CD8-positive, alpha-beta T cell (primary cell): ENCODE measurements at regions of chr1 and their contacts with region 1.

Region 1: DNA sequence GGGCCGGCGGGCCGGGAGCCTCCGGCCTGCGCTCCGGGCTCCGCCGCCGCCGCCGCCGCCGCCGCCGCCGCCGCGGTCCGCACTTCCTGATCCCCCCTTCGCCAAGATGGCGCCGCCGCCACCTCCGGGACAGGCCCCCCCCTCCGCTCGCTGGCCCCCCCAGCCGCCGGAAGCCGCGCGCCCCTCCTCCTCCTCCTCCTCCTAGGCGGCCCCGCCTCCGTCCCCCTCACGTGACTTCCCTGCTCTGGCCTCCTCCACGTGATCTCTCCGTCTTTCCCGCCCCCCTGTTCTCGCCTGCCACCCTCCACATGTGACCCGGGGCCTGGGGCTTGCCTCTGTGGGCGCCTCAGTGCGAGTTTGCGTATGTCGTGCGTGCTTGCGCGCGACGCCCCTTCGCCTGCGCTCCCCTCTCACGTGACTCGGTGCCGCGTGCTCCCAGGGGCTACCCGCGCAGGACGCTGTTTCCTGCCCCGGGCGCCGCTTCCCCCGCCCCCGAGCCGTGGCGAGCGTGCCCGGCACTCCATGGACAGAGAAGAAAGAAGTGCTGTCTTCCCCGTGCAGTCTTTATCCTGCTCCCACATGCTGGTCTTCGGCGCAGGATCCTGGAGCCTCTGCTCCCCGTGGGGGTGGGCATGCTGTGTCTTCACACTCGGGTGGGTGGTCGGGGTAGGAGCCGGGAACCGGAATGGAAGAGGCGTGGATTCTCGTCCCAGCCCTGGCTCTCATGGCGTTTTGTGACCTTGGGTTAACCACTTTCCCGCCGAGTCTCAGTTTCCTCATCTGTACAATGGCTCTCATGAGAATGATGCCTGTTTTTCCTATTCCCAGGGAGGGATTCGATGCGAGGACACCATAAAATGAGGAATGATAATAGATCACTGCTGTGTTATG is at the start of gene UBE2Q1:
- DNase-seq: peak; percentile 99 to 100 (median 99)
- ATAC-seq: peak; percentile 88
- H3K4me3 ChIP-seq: peak within 1 kb of the TSS; percentile 70 to 83
- H3K4me3 Mint-ChIP-seq: peak within 1 kb of the TSS; percentile 90
- H3K27ac ChIP-seq: peak within 1 kb of the TSS; percentile 63 to 94
- H3K27ac Mint-ChIP-seq: peak within 1 kb of the TSS; percentile 89
- H3K4me1 ChIP-seq: peaks cover 20% of the 10 kb centered on the region
- H3K4me1 Mint-ChIP-seq: peaks cover 35% of the 10 kb centered on the region
- H3K27me3 ChIP-seq: no peaks in the 10 kb centered on the region
- H3K27me3 Mint-ChIP-seq: no peaks in the 10 kb centered on the region
- CTCF ChIP-seq: no peak
- total RNA-seq, gene UBE2Q1: 77.5 to 77.7 TPM

Region 2: DNA sequence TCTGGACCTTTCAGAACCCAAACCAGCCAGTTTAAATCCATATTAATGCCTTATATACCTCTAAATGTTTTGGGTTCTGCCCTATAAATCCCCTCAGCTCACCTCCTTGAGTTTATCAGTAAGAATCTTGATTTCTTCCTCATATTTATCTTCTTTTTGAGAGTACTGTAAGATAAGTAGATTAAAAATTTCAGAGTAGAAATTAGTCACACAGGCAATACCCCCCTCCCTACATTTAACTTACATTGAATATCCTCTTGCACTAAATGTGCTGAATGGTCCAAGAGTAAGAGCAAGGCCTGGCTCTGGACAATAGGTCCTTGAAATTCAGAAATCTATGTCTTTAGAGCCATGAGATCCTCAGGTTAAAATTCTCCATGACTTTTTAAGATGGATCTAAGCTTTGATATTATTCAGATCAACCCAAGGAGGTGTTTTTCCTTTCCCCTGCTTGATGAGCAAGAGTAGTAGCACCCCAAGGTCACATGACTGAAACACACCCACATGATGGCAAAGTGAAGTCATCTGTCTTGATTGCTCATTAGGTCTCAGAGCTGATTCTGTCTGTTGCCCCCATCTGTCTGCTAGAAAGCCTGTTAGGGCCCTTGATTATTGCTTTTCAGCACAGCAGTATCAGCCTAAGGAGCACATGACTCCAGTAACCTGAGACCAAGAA is 388.1 kb before region 1 on chr1:
- CTCF ChIA-PET with region 1: no interaction called
- POLR2A ChIA-PET with region 1: no interaction called
- intact Hi-C with region 1: no loop called
- DNase-seq: peak in 2 of 9 experiments; percentile 24 to 27
- ATAC-seq: peak; percentile 58
- H3K4me3 ChIP-seq: no peak overlapping the region
- H3K4me3 Mint-ChIP-seq: no peak overlapping the region
- H3K27ac ChIP-seq: no peak overlapping the region
- H3K27ac Mint-ChIP-seq: peak overlapping the region; percentile 75
- H3K4me1 ChIP-seq: peaks cover 4% of the 10 kb centered on the region
- H3K4me1 Mint-ChIP-seq: peaks cover 39% of the 10 kb centered on the region
- H3K27me3 ChIP-seq: no peaks in the 10 kb centered on the region
- H3K27me3 Mint-ChIP-seq: no peaks in the 10 kb centered on the region
- CTCF ChIP-seq: no peak

Region 3: DNA sequence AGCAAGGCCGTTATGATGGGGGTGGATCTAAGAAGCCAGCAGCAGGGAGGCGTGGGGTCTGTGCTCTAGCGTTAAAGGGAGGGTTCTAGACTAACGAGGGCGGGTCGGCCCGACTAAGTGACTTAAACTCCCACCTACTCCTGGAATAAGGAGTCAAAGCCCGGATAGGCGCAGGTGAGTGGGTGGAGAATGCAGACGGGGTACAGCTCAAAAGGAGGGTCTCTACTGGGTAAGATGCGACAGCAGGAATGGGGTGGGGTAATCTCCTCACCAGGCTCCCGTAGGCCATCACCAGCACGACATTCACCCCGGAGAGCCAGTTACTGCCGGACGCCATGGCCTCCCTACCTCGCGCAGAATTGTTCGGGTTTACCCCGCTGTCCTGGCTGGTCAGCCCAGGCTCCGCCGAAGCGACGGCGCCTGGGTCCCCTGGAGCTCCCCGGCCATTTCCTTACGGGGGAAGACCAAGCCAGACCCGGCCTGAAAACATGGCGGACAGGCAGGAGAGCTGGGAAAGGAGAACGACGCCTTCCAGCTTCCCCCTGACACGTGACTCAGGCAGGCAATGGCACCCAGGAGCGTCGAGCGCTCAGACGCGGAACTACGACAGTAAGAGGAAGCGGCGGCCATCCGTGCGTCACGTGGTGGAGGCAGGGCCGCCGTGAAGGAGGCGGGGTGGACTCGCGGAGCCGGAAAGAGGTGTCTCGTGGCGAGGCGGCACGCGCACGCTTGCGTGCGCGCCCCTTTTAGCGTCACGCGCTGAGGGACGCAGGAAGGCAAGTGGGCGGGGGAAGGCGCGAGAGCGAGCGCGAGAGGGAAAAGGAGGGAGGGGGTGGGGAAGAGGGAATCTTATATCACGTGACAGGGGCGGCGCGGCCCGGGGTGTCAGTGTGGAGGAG is 338.5 kb before region 1 on chr1 and contains the start of gene UBAP2L:
- CTCF ChIA-PET with region 1: no interaction called
- POLR2A ChIA-PET with region 1: no interaction called
- intact Hi-C with region 1: loop called in 1 of 2 experiments (anchors 1 kb)
- DNase-seq: peak; percentile 97 to 100 (median 99)
- ATAC-seq: peak; percentile 82
- H3K4me3 ChIP-seq: peak within 1 kb of the TSS; percentile 68 to 93
- H3K4me3 Mint-ChIP-seq: peak within 1 kb of the TSS; percentile 95
- H3K27ac ChIP-seq: peak within 1 kb of the TSS; percentile 93 to 99
- H3K27ac Mint-ChIP-seq: peak within 1 kb of the TSS; percentile 99
- H3K4me1 ChIP-seq: peaks cover 54% of the 10 kb centered on the region
- H3K4me1 Mint-ChIP-seq: peaks cover 71% of the 10 kb centered on the region
- H3K27me3 ChIP-seq: no peaks in the 10 kb centered on the region
- H3K27me3 Mint-ChIP-seq: no peaks in the 10 kb centered on the region
- CTCF ChIP-seq: no peak
- total RNA-seq, gene UBAP2L: 212 to 226 TPM

Region 4: DNA sequence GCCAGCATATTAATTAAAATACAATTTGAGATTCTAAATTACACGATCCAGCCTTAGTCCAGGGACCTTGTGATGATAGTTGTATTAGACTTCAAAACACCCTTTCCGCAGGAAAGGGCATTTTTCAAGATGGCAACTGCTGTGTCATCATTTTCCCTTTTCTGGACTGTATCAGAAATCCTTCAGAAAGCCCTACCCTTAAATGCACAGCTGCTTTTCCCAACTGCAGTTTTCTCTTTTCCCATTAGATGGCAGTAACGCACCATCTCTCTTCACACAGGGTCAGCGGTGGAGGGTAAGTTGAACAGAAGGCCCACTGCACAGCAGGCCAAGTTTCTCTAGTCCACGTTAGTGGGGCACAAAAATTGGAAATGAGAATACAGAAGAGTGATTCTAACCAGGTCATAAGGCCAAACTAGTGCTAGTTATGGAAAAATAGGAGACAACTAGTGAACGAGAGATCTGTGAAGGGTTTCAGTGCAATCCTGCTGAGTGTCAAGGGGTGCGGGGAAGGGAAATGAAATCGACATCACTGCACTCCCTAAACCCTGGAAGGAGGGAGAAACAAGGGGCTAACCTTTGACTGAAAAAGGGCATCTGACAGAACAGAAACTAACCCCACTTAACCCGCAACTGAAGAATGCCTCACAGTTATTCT is 78.9 kb before region 1 on chr1:
- CTCF ChIA-PET with region 1: interaction called, 12 read pairs
- POLR2A ChIA-PET with region 1: no interaction called
- intact Hi-C with region 1: no loop called
- DNase-seq: peak in 8 of 9 experiments; percentile 12 to 80 (median 58)
- ATAC-seq: peak; percentile 91
- H3K4me3 ChIP-seq: no peak overlapping the region
- H3K4me3 Mint-ChIP-seq: no peak overlapping the region
- H3K27ac ChIP-seq: no peak overlapping the region
- H3K27ac Mint-ChIP-seq: no peak overlapping the region
- H3K4me1 ChIP-seq: peaks cover 3% of the 10 kb centered on the region
- H3K4me1 Mint-ChIP-seq: peaks cover 9% of the 10 kb centered on the region
- H3K27me3 ChIP-seq: no peaks in the 10 kb centered on the region
- H3K27me3 Mint-ChIP-seq: peaks cover 3% of the 10 kb centered on the region
- CTCF ChIP-seq: peak; percentile 98

Region 5: GRCh38 chr1:154493276-154493675 is 65.5 kb before region 1 on chr1:
- CTCF ChIA-PET with region 1: no interaction called
- POLR2A ChIA-PET with region 1: no interaction called
- intact Hi-C with region 1: no loop called
- DNase-seq: peak in 4 of 9 experiments; percentile 22 to 59 (median 44)
- ATAC-seq: peak; percentile 36
- H3K4me3 ChIP-seq: no peak overlapping the region
- H3K4me3 Mint-ChIP-seq: peak overlapping the region; percentile 73
- H3K27ac ChIP-seq: peak overlapping the region in 1 of 2 experiments; percentile 14
- H3K27ac Mint-ChIP-seq: no peak overlapping the region
- H3K4me1 ChIP-seq: peaks cover 36% of the 10 kb centered on the region
- H3K4me1 Mint-ChIP-seq: peaks cover 46% of the 10 kb centered on the region
- H3K27me3 ChIP-seq: no peaks in the 10 kb centered on the region
- H3K27me3 Mint-ChIP-seq: no peaks in the 10 kb centered on the region
- CTCF ChIP-seq: no peak

Region 6: DNA sequence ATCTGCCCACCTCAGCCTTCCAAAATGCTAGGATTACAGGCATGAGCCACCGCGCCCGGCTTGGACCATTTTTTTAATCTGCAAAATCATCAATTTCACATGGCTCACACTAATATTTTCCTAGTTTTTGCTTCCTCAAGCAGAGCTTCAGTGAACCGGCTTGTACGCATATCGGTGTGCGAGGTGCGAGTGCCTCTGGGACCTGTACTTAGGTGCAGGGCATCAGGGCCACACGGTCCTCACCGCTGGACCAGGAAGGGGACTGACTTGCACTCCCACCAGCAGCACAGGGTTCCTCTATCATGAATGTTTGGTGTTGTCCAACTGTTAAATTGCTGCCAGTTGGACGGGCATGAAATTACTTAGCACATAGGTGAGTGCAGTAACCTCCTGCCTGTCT is 41.2 kb before region 1 on chr1:
- CTCF ChIA-PET with region 1: no interaction called
- POLR2A ChIA-PET with region 1: no interaction called
- intact Hi-C with region 1: no loop called
- DNase-seq: no peak
- ATAC-seq: no peak
- H3K4me3 ChIP-seq: no peak overlapping the region
- H3K4me3 Mint-ChIP-seq: no peak overlapping the region
- H3K27ac ChIP-seq: no peak overlapping the region
- H3K27ac Mint-ChIP-seq: no peak overlapping the region
- H3K4me1 ChIP-seq: no peaks in the 10 kb centered on the region
- H3K4me1 Mint-ChIP-seq: no peaks in the 10 kb centered on the region
- H3K27me3 ChIP-seq: no peaks in the 10 kb centered on the region
- H3K27me3 Mint-ChIP-seq: peaks cover 8% of the 10 kb centered on the region
- CTCF ChIP-seq: no peak

Region 7: GRCh38 chr1:154669464-154670282 is 110.9 kb after region 1 on chr1:
- CTCF ChIA-PET with region 1: interaction called, 19 read pairs
- POLR2A ChIA-PET with region 1: no interaction called
- intact Hi-C with region 1: loop called (anchors 1 kb)
- DNase-seq: peak; percentile 48 to 86 (median 74)
- ATAC-seq: peak; percentile 100
- H3K4me3 ChIP-seq: no peak overlapping the region
- H3K4me3 Mint-ChIP-seq: no peak overlapping the region
- H3K27ac ChIP-seq: no peak overlapping the region
- H3K27ac Mint-ChIP-seq: no peak overlapping the region
- H3K4me1 ChIP-seq: peaks cover 3% of the 10 kb centered on the region
- H3K4me1 Mint-ChIP-seq: no peaks in the 10 kb centered on the region
- H3K27me3 ChIP-seq: no peaks in the 10 kb centered on the region
- H3K27me3 Mint-ChIP-seq: no peaks in the 10 kb centered on the region
- CTCF ChIP-seq: peak; percentile 80

Region 8: GRCh38 chr1:154726443-154726842 is 167.6 kb after region 1 on chr1:
- CTCF ChIA-PET with region 1: no interaction called
- POLR2A ChIA-PET with region 1: no interaction called
- intact Hi-C with region 1: no loop called
- DNase-seq: no peak
- ATAC-seq: no peak
- H3K4me3 ChIP-seq: no peak overlapping the region
- H3K4me3 Mint-ChIP-seq: no peak overlapping the region
- H3K27ac ChIP-seq: no peak overlapping the region
- H3K27ac Mint-ChIP-seq: no peak overlapping the region
- H3K4me1 ChIP-seq: no peaks in the 10 kb centered on the region
- H3K4me1 Mint-ChIP-seq: no peaks in the 10 kb centered on the region
- H3K27me3 ChIP-seq: no peaks in the 10 kb centered on the region
- H3K27me3 Mint-ChIP-seq: peaks cover 4% of the 10 kb centered on the region
- CTCF ChIP-seq: no peak

Region 9: DNA sequence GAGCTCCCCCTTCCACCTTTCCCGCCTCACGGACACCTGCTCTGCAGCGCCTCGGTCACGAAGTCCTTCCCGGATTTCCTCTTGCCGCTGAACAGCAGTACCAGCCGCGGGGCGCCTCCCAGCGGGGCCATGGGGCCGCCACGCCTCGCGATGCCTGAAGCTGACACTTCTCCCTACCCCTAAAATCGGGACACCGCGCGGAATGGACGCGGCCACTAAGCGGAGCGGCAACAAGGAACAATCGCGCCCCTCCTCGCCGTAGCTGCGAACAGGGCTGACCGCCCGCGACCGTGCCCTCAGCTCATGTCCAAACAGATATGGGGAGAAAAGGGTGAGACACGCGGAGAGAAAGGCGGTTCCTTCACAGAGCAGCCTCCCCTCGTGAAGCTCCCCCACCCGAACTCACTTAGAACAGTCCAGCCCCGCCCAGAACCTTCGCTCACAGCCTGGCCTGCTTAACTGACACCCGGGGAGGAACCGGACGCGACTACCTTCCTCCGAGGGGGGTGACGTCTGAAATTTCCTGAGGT is 377.8 kb after region 1 on chr1 and contains the start of gene PMVK:
- CTCF ChIA-PET with region 1: interaction called, 5 read pairs
- POLR2A ChIA-PET with region 1: interaction called, 3 read pairs
- intact Hi-C with region 1: loop called (anchors 1 kb)
- DNase-seq: peak; percentile 89 to 98 (median 96)
- ATAC-seq: peak; percentile 85
- H3K4me3 ChIP-seq: peak within 1 kb of the TSS; percentile 87 to 90
- H3K4me3 Mint-ChIP-seq: peak within 1 kb of the TSS; percentile 97
- H3K27ac ChIP-seq: peak within 1 kb of the TSS; percentile 94 to 97
- H3K27ac Mint-ChIP-seq: peak within 1 kb of the TSS; percentile 99
- H3K4me1 ChIP-seq: peaks cover 32% of the 10 kb centered on the region
- H3K4me1 Mint-ChIP-seq: peaks cover 49% of the 10 kb centered on the region
- H3K27me3 ChIP-seq: no peaks in the 10 kb centered on the region
- H3K27me3 Mint-ChIP-seq: no peaks in the 10 kb centered on the region
- CTCF ChIP-seq: no peak
- total RNA-seq, gene PMVK: 6.7 to 7.3 TPM

Region 10: DNA sequence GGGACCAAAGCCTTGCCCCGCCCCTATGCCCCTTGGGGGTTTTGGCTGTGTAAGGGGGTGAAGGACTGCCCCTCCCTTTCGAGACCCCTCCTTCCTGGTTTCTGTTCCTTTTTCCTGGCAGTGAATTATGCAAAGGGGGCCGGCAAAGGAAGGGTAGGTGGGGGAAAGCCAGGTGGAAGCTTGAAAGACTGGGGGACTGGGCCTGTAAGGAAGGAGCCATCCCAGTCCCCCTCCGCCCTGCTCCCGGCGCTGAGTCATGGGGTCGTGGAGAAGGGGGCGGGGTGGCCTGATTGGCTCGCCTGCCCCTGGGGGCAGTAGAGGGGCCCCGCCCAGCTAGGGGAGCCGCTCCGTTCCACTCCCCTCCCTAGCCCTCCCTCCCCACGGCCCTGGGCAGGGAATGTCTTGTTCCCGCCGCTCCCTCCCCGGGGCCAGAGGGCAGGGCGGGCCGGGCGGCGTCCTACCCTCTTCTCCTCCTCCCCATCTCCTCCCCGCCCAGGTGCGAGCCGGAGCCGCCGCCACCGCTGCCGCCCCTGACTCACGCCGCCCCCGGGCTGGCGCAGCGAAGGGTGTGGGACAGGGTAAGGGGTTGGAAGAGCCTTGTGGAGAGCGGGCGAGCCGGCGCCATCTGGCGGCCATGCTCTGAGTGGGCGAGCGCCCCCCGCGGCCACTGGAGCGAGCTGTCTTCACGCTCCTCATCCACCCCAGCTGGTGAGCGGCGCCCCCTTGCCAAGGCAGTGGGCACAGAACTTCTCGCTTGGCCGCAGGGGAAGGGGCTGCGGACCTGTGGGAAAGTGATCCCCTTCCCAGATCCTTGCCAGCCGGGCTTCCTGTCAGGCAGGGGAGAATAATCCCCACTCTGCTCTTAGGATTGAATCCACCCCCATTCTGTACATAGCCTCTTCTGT is 458.5 kb after region 1 on chr1:
- CTCF ChIA-PET with region 1: interaction called, 7 read pairs
- POLR2A ChIA-PET with region 1: no interaction called
- intact Hi-C with region 1: loop called (anchors 1 kb)
- DNase-seq: peak; percentile 71 to 92 (median 88)
- ATAC-seq: peak; percentile 98
- H3K4me3 ChIP-seq: peak overlapping the region; percentile 31 to 46
- H3K4me3 Mint-ChIP-seq: peak overlapping the region; percentile 59
- H3K27ac ChIP-seq: no peak overlapping the region
- H3K27ac Mint-ChIP-seq: no peak overlapping the region
- H3K4me1 ChIP-seq: peaks cover 55% of the 10 kb centered on the region
- H3K4me1 Mint-ChIP-seq: peaks cover 44% of the 10 kb centered on the region
- H3K27me3 ChIP-seq: no peaks in the 10 kb centered on the region
- H3K27me3 Mint-ChIP-seq: no peaks in the 10 kb centered on the region
- CTCF ChIP-seq: peak; percentile 99

Region 11: GRCh38 chr1:155135415-155136028 is 576.7 kb after region 1 on chr1 and contains the start of gene SLC50A1:
- CTCF ChIA-PET with region 1: interaction called, 4 read pairs
- POLR2A ChIA-PET with region 1: interaction called, 3 read pairs
- intact Hi-C with region 1: loop called in 1 of 2 experiments (anchors 1 kb)
- DNase-seq: peak; percentile 82 to 96 (median 92)
- ATAC-seq: peak; percentile 84
- H3K4me3 ChIP-seq: peak within 1 kb of the TSS; percentile 93 to 95
- H3K4me3 Mint-ChIP-seq: peak within 1 kb of the TSS; percentile 98
- H3K27ac ChIP-seq: peak within 1 kb of the TSS; percentile 78 to 99
- H3K27ac Mint-ChIP-seq: peak within 1 kb of the TSS; percentile 99
- H3K4me1 ChIP-seq: peaks cover 29% of the 10 kb centered on the region
- H3K4me1 Mint-ChIP-seq: peaks cover 49% of the 10 kb centered on the region
- H3K27me3 ChIP-seq: no peaks in the 10 kb centered on the region
- H3K27me3 Mint-ChIP-seq: no peaks in the 10 kb centered on the region
- CTCF ChIP-seq: no peak
- total RNA-seq, gene SLC50A1: 12.9 to 14.2 TPM